MCF 10A (cell line): ENCODE measurements at regions of chr14 and their contacts with region 1.

Region 1: DNA sequence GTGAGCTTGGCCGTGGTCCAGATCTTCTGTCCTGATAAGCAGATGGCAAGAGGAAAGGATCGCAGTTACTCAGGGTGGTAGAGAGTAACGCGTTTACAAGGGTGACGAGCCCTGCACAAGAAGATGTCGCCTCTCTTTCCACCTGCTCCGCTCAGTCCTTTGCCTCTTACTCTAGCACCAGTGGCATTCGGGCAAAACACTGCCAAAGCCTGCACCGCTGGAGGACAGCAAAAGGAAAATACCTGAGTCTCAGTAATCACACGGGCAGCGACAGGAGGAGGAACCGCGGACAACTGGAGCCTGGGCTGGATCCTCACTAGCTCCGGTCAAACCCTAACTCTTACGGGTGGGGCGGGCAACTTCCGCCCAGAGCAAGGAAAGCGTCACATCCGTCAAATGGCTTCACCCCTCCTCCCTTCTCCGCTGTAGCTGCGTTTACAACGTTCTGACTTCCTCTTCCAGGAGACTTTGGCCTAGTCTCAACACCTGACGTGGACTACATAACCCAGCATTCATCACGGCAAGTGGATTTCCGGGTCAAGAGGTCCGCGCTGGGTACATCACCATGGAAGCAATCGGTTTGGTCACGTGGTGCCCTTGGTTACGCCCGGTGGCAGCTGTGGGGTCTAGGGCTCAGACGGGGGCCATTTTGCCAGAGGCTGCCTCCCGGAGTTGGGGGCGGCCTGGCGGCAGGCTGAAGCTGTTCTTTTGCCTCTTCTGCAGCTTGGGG is at the starts of genes KLHL28 and TOGARAM1:
- DNase-seq: peak; percentile 100
- H3K4me3 Mint-ChIP-seq: no peak within 1 kb of the TSS
- H3K27ac Mint-ChIP-seq: no peak within 1 kb of the TSS
- H3K4me1 Mint-ChIP-seq: peaks cover 24% of the 10 kb centered on the region
- H3K27me3 Mint-ChIP-seq: no peaks in the 10 kb centered on the region
- CTCF ChIP-seq: no peak
- total RNA-seq, gene KLHL28: 11.2 and 13.8 TPM in 2 replicates
- total RNA-seq, gene TOGARAM1: 12.0 and 15.8 TPM in 2 replicates

Region 2: DNA sequence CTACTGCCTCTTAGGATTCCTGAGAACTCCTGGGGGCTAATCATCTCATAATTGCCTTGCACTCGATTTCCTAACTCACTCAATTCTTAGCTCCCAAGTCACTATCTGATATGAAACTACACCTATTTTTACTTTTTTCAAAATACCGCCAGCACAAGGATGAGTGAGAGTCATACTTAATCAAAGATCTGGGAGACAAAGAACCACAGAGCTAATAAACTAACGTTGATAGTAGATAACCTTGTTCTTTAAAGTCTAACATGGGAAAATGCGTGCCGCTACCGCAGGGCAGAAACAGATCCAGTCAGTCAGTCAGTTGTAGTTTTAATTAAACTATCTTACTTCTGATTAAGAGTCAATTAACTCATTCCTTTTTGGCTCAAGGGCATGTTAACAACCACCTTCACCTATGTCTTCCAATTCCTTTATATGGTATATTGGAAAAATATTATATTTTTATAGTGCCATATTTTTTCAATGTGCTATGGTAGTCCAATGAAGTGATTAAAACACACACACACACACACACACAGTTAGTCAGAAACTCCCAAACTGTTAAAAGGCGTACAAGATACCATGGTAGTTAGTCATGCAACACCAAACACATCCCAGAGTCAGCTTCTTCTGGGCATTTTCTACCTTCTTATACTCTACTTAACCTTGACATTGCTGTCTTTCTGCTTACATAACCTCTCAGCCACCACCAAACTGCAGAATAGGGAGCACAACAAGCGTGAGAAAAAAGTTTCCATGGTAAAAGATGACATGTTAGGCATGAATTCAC is 114.1 kb before region 1 on chr14:
- CTCF ChIA-PET with region 1: no interaction called
- POLR2A ChIA-PET with region 1: no interaction called
- intact Hi-C with region 1: no loop called
- DNase-seq: no peak
- H3K4me3 Mint-ChIP-seq: no peak overlapping the region
- H3K27ac Mint-ChIP-seq: no peak overlapping the region
- H3K4me1 Mint-ChIP-seq: no peaks in the 10 kb centered on the region
- H3K27me3 Mint-ChIP-seq: no peaks in the 10 kb centered on the region
- CTCF ChIP-seq: no peak

Region 3: GRCh38 chr14:44873536-44873935 is 88.2 kb before region 1 on chr14:
- CTCF ChIA-PET with region 1: no interaction called
- POLR2A ChIA-PET with region 1: no interaction called
- intact Hi-C with region 1: no loop called
- DNase-seq: no peak
- H3K4me3 Mint-ChIP-seq: no peak overlapping the region
- H3K27ac Mint-ChIP-seq: no peak overlapping the region
- H3K4me1 Mint-ChIP-seq: no peaks in the 10 kb centered on the region
- H3K27me3 Mint-ChIP-seq: peaks cover 11% of the 10 kb centered on the region
- CTCF ChIP-seq: no peak

Region 4: GRCh38 chr14:44912041-44912869 is 49.5 kb before region 1 on chr14:
- CTCF ChIA-PET with region 1: interaction called, 17 read pairs
- POLR2A ChIA-PET with region 1: interaction called, 8 read pairs
- intact Hi-C with region 1: loop called (anchors 5 kb)
- DNase-seq: no peak
- H3K4me3 Mint-ChIP-seq: no peak overlapping the region
- H3K27ac Mint-ChIP-seq: no peak overlapping the region
- H3K4me1 Mint-ChIP-seq: no peaks in the 10 kb centered on the region
- H3K27me3 Mint-ChIP-seq: no peaks in the 10 kb centered on the region
- CTCF ChIP-seq: no peak

Region 5: GRCh38 chr14:45051180-45051579 is 89.4 kb after region 1 on chr14:
- CTCF ChIA-PET with region 1: no interaction called
- POLR2A ChIA-PET with region 1: no interaction called
- intact Hi-C with region 1: no loop called
- DNase-seq: no peak
- H3K4me3 Mint-ChIP-seq: no peak overlapping the region
- H3K27ac Mint-ChIP-seq: no peak overlapping the region
- H3K4me1 Mint-ChIP-seq: no peaks in the 10 kb centered on the region
- H3K27me3 Mint-ChIP-seq: no peaks in the 10 kb centered on the region
- CTCF ChIP-seq: no peak

Region 6: DNA sequence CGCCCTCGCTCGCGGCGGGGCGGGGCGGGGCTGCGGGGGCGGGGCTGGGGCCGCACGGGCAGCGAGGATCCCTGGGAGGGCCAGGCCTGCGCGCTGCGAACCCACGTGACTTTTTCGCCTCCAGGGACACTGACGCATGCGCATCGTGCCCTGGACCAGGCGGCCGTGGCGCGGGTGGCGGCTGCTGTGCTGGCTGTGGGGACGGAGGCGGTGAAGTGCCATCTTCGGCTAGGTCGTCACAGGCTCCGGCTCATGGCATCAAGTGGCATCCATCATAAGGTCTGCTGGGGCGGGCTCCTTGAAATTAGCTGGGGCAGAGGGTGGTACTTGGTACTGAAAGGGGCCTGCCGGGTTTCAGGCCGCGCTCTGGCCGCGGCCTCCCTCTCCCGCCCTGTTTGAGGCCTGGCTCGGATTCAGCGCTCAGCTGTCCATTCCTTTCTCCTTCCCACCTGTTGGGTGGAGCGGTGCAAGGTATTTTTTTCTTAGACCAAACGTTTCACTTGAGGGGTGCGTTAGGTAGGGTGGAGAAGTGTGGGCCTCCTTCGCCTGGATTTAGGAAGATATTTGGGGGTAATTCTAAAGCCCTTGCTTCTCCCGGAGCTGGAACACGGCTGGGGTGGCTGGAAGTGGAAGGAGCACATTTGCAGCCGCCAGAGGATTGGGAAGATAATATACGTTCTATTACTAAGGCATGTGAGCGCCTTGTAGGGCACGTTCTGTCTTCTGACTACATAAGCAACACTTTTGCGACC is 122.4 kb after region 1 on chr14 and contains the start of gene PRPF39:
- CTCF ChIA-PET with region 1: no interaction called
- POLR2A ChIA-PET with region 1: interaction called, 116 read pairs
- intact Hi-C with region 1: loop called (anchors 2 kb)
- DNase-seq: peak; percentile 93
- H3K4me3 Mint-ChIP-seq: peak within 1 kb of the TSS; percentile 97
- H3K27ac Mint-ChIP-seq: peak within 1 kb of the TSS; percentile 94
- H3K4me1 Mint-ChIP-seq: peaks cover 36% of the 10 kb centered on the region
- H3K27me3 Mint-ChIP-seq: no peaks in the 10 kb centered on the region
- CTCF ChIP-seq: no peak
- total RNA-seq, gene PRPF39: 36.7 and 41.4 TPM in 2 replicates

Region 7: DNA sequence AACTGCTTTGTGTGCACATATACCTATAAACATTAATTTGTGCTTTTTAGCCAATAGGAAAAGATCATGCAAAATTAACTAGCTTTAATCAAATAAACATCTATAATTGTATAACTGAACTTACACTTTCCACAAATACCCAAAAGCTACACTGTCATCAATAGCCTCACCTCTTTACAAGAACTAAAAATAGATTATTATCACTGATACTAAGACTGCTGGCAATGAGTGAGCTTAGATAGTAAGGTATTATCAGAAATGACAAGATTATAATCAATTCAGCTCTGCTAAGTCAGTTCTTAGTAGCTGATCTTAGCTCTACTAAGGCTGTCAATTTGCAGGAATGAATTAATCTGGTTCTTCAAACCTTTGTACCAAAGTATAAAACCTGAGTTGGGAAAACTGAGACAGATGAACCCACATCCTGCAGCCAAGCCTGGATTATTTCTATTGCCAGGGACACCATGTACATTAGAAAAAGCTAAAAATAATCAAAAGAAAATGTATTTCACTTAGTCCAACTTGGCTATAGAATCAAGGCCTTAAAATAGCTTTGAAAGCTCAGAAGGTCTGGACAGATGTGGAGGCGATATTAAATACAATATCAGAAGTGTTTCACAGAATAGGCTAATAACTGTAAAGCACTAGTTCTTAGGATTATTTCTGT is 167.3 kb after region 1 on chr14:
- CTCF ChIA-PET with region 1: interaction called, 3 read pairs
- POLR2A ChIA-PET with region 1: interaction called, 105 read pairs
- intact Hi-C with region 1: loop called (anchors 1 kb)
- DNase-seq: no peak
- H3K4me3 Mint-ChIP-seq: no peak overlapping the region
- H3K27ac Mint-ChIP-seq: no peak overlapping the region
- H3K4me1 Mint-ChIP-seq: no peaks in the 10 kb centered on the region
- H3K27me3 Mint-ChIP-seq: no peaks in the 10 kb centered on the region
- CTCF ChIP-seq: no peak